HEK293 (cell line): ENCODE measurements at regions of chr15 and their contacts with region 1.

Region 1: GRCh38 chr15:40405501-40406381 is at the start of gene IVD:
- H3K4me3 ChIP-seq: peak within 1 kb of the TSS; percentile 77
- H3K27ac ChIP-seq: peak within 1 kb of the TSS; percentile 79
- H3K4me1 ChIP-seq: no peaks in the 10 kb centered on the region
- CTCF ChIP-seq: no peak

Region 2: GRCh38 chr15:40290918-40291574 is 114.7 kb before region 1 on chr15:
- CTCF ChIA-PET with region 1: no interaction called
- POLR2A ChIA-PET with region 1: no interaction called
- H3K4me3 ChIP-seq: no peak overlapping the region
- H3K27ac ChIP-seq: no peak overlapping the region; the same call in 1 of the 2 replicates
- H3K4me1 ChIP-seq: peaks cover 4% of the 10 kb centered on the region
- CTCF ChIP-seq: no peak

Region 3: DNA sequence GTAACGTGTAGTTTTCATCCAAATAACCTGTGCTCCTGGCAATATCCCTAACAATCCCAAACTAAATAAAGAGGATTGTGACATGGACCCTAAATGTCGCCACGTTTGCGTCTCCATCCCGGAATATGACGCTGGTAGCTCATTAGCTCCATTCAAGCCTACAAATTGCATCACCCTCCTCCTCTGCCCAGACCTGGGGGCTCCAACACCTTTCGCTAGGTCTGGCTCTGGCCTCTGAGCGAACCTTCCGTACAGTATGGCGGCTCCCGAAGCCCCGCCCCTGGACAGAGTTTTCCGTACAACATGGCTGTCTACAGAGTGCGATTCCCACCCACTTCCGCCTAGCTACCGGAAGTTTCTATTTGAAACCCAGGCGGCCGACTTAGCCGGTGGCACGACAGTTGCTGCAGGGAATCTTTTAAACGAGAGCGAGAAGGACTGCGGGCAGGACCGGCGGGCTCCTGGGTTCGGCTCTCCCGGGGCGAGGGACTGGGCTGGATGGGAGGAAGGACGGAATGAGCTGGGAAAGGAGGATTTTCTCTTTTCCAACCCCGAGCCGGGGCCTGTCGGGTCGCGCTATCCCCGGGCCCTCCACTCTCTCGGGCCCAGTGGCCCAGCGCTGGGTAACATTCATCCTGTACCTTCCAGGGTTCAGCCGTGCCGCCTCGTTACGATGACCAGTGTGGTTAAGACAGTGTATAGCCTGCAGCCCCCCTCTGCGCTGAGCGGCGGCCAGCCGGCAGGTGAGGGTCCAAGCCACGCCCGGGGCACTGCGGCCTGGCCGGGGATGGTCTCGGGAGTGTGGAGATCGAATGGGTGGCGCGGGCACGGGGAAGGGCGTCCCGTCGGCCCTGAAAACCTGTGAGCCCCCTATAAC is 22.9 kb before region 1 on chr15 and contains the start of gene KNSTRN:
- CTCF ChIA-PET with region 1: interaction called, 3 read pairs
- POLR2A ChIA-PET with region 1: interaction called, 11 read pairs
- H3K4me3 ChIP-seq: peak within 1 kb of the TSS; percentile 92
- H3K27ac ChIP-seq: peak within 1 kb of the TSS; percentile 63; the same call in 1 of the 2 replicates
- H3K4me1 ChIP-seq: no peaks in the 10 kb centered on the region
- CTCF ChIP-seq: no peak

Region 4: GRCh38 chr15:40440743-40441564 is 35.2 kb after region 1 on chr15 and contains the start of gene BAHD1:
- CTCF ChIA-PET with region 1: no interaction called
- POLR2A ChIA-PET with region 1: interaction called, 12 read pairs
- H3K4me3 ChIP-seq: peak within 1 kb of the TSS; percentile 61
- H3K27ac ChIP-seq: peak within 1 kb of the TSS; percentile 73; the same call in 1 of the 2 replicates
- H3K4me1 ChIP-seq: peaks cover 21% of the 10 kb centered on the region
- CTCF ChIP-seq: no peak